Dendritic cell treated with granulocyte-macrophage colony-stimulating factor and Interleukin-4, amounts not matched to agents 40 ng/mL and 50 ng/mL, for 4 days (primary cell): ENCODE measurements at regions of chr16 and their contacts with region 1.

Region 1: DNA sequence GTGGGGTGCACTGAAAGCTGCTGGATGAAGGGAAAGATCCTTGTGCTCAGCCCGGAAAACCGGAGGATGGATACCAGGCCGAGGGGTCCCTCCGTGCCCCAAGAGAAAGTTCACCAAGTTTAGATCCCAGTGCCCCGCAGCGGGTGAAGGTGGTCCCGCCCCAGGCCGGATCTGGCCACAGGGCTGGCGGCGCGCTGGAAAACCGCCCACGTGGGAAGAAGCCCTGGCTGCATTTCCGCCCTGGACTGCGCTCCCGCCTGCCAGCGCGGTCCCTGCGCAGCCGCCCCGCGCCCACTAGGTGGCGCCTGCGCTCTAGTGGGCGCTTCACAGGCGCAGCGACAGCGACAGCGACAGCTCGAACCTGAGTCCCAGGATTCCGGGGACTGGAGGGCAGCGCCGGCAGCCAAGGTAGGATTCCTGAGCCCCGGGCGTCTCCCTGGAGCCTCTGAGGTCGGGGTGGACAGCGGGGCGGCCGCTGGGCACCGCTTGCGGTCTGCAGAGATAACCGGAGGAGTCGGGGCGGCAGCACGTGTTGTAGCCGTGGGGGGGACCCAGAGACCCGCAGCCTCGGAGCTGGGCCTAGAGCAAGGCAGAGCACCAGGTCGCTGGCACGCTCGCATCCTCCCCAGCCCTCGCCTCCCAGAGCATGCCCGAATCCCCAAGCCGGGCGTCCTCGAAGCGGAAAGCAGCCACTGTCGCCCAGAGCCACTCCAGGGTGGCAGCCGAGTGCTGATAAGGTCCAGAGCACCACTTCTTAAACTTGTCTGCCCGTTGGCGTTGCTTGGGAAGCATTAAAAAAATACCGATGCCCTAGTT is at the start of gene CHD9:
- H3K4me3 Mint-ChIP-seq: peak within 1 kb of the TSS; percentile 95
- H3K27ac Mint-ChIP-seq: peak within 1 kb of the TSS; percentile 92
- H3K4me1 Mint-ChIP-seq: peaks cover 52% of the 10 kb centered on the region
- H3K27me3 Mint-ChIP-seq: no peaks in the 10 kb centered on the region

Region 2: DNA sequence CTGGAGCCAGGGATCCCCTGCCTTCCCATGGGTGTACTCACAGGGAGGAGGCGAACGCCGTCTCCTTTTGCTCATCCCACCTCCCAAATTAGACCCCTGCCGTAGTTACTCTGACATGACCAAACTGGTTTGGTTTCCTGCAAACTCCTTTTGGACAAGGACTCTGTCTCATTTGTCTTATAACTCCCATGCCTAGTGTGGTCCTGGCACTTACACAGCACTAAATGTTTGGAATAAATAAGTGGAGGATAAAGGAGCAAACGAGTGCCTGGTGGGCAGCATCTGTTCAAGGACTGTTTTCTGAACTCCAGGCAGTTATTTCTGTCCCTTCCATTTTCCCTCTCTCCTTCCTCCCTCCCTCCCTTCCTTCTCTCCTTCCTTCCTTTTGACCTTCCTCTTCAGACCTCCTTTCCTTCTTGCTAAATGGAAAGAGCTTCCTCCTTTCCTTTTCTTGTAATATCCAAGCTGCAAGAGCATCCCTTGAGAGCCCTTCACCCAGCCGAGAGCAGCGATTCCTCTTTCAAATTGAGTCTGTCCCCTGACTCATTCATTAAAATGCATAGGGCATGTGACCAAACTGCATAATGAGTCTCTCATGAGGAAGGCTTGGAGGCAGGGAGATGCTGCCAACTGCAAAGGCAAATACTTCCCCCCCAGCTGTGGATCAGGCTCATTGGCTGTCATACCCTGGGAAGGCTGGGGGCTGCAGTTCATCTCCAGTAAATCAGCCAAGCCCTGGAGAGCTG is 36.8 kb after region 1 on chr16:
- intact Hi-C with region 1: loop called (anchors 2 kb)
- H3K4me3 Mint-ChIP-seq: no peak overlapping the region
- H3K27ac Mint-ChIP-seq: peak overlapping the region; percentile 81
- H3K4me1 Mint-ChIP-seq: peaks cover 72% of the 10 kb centered on the region
- H3K27me3 Mint-ChIP-seq: no peaks in the 10 kb centered on the region

Region 3: GRCh38 chr16:53130159-53131049 is 75.5 kb after region 1 on chr16:
- intact Hi-C with region 1: loop called (anchors 1 kb)
- H3K4me3 Mint-ChIP-seq: peak overlapping the region; percentile 77
- H3K27ac Mint-ChIP-seq: peak overlapping the region; percentile 88
- H3K4me1 Mint-ChIP-seq: peaks cover 30% of the 10 kb centered on the region
- H3K27me3 Mint-ChIP-seq: no peaks in the 10 kb centered on the region

Region 4: DNA sequence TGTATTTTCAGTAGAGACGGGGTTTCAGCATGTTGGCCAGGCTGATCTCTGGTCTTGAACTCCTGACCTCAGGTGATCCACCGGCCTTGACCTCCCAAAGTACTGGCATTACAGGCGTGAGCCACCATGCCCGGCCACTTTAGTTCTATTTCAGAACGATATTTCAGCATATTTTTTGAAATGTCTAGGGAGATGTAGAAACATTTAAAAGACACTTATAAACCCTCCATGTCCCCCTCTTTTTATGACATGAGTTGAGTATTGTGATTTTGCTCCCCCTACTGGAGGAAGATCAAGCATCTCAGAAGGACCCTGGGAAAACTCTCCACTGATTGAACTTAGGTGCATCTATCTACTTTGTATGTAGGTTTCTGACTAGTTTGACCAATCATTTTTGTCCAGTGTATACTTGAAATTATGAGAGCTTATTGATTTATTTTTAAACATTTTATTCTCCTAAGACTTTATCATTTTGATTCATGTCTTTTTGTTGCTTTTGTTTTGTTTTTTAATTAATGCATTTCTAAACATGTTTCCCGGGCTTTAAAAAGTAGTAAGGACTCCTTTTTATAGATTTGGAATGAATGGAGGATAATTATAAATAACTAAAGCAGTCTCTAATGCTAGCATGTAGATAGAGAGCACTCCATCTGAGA is 105.0 kb after region 1 on chr16:
- intact Hi-C with region 1: loop called (anchors 1 kb)
- H3K4me3 Mint-ChIP-seq: no peak overlapping the region
- H3K27ac Mint-ChIP-seq: no peak overlapping the region
- H3K4me1 Mint-ChIP-seq: peaks cover 4% of the 10 kb centered on the region
- H3K27me3 Mint-ChIP-seq: no peaks in the 10 kb centered on the region

Region 5: GRCh38 chr16:53207810-53208752 is 153.2 kb after region 1 on chr16:
- intact Hi-C with region 1: loop called (anchors 2 kb)
- H3K4me3 Mint-ChIP-seq: peak overlapping the region; percentile 76
- H3K27ac Mint-ChIP-seq: peak overlapping the region; percentile 94
- H3K4me1 Mint-ChIP-seq: peaks cover 23% of the 10 kb centered on the region
- H3K27me3 Mint-ChIP-seq: no peaks in the 10 kb centered on the region